Cardiac septum (tissue), 1 donor: ENCODE measurements at regions of chr7 and their contacts with region 1.

Region 1: DNA sequence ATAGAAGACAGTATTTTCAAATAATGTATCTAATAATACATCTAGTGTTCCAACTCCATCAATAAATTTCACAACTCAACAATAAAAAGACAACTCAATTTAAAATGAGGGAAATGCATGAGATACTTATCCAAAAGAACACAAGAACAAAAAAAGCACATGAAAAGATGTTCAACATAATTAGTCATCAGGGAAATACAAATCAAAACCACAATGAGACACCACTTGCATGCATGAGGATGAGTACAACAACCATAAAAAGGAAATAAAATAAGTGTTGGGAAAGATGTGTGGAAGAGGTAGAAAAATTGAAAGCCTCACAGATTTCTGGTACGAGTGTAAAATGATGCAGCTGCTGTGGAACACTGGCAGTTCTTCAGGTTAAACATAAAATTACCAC is 111.6 kb upstream of the PTPRZ1 start:
- DNase-seq: no peak

Region 2: DNA sequence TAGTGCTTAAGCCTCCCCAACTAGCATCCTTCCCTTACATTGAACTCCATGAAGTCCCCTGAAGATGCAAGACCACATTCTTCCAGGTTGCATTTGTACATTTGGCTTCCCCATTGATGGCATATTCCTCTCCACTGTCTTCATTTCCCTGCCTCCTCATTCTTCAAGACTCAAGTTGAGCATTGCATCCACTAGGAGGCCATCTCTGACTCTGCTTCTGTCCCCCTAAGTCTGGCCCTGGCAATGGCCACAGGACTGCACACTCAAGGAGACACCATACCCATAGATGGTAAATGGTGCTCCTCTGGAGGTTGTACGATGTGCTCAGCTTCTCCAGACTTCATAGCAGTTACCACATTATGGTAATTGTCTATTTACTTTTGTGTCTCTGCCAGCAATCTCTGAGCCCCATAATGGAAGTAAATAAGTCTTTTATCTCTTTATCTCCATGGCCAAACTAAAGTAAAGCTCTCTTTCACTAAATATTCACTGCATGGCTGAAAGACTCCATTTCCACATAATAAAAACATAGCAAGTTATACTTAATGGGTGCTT is 224.2 kb after region 1 on chr7:
- intact Hi-C with region 1: loop called (anchors 10 kb)
- DNase-seq: no peak